Right cardiac atrium (tissue), 5 donors: ENCODE measurements at regions of chr9 and their contacts with region 1.

Region 1: GRCh38 chr9:92728831-92729734 is 35.5 kb downstream of the BICD2 start:
- DNase-seq: peak in 2 of 3 donors; percentile 67 to 69
- ATAC-seq: peak; percentile 44 to 53
- H3K4me3 ChIP-seq: no peak overlapping the region
- H3K27ac ChIP-seq: no peak overlapping the region
- H3K4me1 ChIP-seq: peaks cover 7% of the 10 kb centered on the region
- H3K27me3 ChIP-seq: no peaks in the 10 kb centered on the region

Region 2: GRCh38 chr9:92634712-92635605 is 94.1 kb before region 1 on chr9:
- intact Hi-C with region 1: no loop called
- DNase-seq: peak; percentile 78 to 93 (median 92)
- ATAC-seq: peak; percentile 84 to 86
- H3K4me3 ChIP-seq: no peak overlapping the region
- H3K27ac ChIP-seq: no peak overlapping the region
- H3K4me1 ChIP-seq: no peaks in the 10 kb centered on the region
- H3K27me3 ChIP-seq: no peaks in the 10 kb centered on the region

Region 3: DNA sequence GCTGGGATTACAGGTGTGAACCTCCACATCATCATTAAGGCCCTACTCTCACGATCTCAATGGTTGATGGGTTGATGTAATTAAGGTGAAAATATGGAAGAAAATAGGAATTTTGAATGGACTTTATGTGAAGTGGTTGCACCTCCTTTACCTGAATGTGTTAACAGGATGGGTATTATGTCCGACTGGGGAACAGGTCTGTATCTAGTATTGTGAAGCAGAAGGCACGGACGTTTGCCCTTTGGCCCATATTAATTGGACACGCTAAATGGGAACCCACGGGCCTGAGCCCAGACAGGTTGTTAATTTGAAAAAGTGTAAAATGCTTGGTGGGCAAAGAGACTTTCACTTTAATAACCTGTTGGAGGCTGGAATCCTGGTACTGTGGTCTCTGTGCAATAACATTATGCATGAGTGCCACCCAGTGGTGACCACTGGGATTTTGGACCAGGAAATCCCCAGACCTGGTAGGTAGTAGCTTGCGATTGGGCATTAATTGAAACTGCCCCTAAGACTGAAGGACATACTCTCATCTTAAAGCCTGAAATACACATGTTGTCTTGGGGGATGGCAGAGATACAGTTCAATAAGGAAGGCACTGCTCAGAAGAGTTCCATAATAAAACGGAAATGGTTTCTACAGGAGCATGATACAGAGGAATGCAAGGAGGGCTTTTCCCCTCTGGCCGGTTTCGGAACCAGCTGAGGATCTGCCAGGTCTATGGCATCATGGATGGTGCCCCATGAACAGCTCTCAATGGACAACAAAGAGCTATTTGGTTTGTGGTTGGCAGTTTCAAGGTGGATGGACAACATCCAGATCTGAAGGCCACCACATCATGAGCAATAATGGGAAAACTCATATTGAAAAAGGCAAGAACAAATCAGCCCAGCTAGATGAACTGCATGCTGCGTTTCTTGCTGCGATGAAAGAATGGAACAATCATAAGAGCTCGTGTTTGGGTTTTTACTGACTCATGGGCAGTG is 61.8 kb after region 1 on chr9:
- intact Hi-C with region 1: loop called in 1 of 4 experiments (anchors 10 kb)
- DNase-seq: peak; percentile 73 to 91 (median 85)
- ATAC-seq: peak; percentile 93 to 94
- H3K4me3 ChIP-seq: no peak overlapping the region
- H3K27ac ChIP-seq: no peak overlapping the region
- H3K4me1 ChIP-seq: no peaks in the 10 kb centered on the region
- H3K27me3 ChIP-seq: no peaks in the 10 kb centered on the region

Region 4: DNA sequence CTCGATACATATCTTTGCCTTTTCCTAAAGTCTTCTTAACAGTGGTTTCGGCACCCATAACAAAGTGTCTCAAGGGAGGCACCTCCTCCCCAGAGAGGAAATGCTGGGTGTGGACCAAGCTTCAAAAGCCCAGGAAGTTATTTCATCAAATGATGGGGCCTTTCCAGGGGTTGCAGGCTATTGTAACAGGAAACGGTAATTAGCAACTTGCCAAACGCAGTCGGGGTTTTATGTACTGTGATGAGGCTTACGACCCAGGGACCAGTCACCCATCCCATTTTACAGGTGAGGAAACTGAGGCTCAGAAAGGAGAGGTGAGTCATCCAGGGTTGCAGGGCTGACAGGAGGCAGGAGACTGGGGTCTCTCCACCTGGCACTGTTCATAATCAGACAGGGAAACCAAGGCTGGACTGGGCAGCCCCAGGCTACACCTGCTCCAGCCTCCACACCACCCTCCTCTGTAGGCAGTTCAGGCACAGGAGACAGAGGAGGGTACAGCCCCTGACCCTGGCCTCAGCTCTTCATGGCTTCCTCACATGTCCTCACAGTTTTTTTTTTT is 299.4 kb after region 1 on chr9:
- intact Hi-C with region 1: no loop called
- DNase-seq: peak in 1 of 3 donors; percentile 5
- ATAC-seq: peak in 1 of 2 donors; percentile 23
- H3K4me3 ChIP-seq: no peak overlapping the region
- H3K27ac ChIP-seq: no peak overlapping the region
- H3K4me1 ChIP-seq: no peaks in the 10 kb centered on the region
- H3K27me3 ChIP-seq: no peaks in the 10 kb centered on the region